Endothelial cell of umbilical vein (primary cell): ENCODE measurements at regions of chr17 and their contacts with region 1.

Region 1: GRCh38 chr17:78013683-78014467 is 55.4 kb downstream of the TNRC6C start:
- DNase-seq: peak; percentile 74
- H3K4me3 ChIP-seq: no peak overlapping the region
- H3K27ac ChIP-seq: no peak overlapping the region
- H3K4me1 ChIP-seq: no peaks in the 10 kb centered on the region
- H3K27me3 ChIP-seq: no peaks in the 10 kb centered on the region
- CTCF ChIP-seq: peak; percentile 54 to 66
- POLR2A ChIP-seq: no peak

Region 2: DNA sequence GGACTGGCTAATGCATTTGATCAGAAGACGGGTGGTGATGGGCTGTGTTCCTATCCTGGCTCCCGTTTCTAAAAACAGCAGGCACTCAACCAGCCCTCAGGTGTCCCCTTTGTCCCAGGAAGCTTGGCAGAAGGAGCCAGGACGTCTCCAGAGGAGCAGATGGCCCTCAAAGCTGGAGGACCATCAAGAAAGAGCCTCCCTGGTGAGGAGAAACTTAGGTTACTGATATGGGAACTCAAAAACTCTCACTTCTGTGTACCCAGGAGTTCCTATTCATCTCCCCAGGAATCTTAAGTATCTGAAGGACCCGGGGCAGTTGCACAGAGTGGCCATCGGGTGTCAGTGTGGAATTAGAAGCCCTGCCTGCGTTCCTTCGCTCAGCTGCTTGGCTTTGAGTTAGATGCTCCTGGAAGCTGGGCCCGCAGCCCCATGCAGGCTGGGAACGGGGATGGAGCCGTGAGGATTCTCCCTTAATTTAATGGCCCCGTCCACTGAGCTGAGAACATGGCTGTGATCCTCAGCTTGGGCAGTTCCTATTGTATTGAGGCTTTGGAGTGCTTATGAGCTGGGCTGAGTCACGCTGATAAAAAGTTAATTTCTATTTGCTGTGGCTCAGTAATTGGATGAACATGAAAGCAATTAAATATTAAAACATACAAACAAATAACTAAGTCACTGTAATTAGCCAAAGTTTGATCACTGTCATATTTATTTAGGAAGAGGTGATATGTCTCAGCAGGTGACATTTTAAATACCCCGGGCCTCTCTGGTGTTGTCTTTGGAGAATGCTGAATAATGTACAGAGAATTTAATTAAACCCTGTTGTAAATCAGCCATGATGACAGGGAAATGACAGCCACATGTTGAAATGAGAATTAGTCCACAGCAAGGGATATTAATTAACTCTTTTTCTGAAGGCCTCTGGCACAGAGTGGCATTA is 471.1 kb before region 1 on chr17:
- CTCF ChIA-PET with region 1: interaction called, 98 read pairs
- POLR2A ChIA-PET with region 1: no interaction called
- dilution Hi-C with region 1: no loop called
- intact Hi-C with region 1: loop called (anchors 1 kb)
- DNase-seq: peak; percentile 71
- H3K4me3 ChIP-seq: no peak overlapping the region
- H3K27ac ChIP-seq: no peak overlapping the region
- H3K4me1 ChIP-seq: no peaks in the 10 kb centered on the region
- H3K27me3 ChIP-seq: peaks cover 28 to 30% of the 10 kb centered on the region in 2 experiments
- CTCF ChIP-seq: peak; percentile 84 to 87
- POLR2A ChIP-seq: no peak

Region 3: DNA sequence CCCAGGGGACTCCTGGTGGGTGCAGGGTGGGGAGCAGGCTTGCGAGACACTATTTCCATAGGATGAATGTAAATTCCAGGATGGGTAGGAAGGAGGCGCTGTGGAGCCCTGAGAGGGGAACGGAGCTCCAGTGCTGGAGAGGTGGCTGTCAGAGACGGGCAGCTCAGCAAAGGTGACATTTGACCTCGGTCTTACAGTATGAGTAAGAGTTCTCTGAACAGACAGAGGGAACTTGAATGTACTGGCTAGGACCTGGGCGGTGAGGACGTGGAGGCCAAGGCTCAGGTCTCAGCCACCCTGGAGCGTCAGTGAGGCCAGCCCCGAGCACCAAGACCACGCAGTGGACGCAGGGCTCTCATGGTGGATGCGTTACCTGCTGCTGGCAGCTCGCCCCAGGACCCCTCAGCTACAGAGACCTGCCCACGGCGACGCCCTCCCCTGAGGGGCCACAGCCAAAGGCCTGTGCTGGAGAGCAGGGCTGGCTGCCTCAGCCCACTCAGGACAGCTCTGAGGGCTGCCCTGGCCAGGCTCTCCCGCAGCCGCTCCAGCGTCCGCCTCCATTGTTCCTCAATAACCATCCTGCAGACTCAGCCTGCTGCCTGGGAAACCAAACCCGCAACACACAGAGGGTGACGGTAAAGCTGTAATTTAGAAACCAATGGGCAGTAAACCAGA is 121.3 kb before region 1 on chr17:
- CTCF ChIA-PET with region 1: interaction called, 25 read pairs
- POLR2A ChIA-PET with region 1: no interaction called
- dilution Hi-C with region 1: no loop called
- intact Hi-C with region 1: loop called (anchors 1 kb)
- DNase-seq: no peak
- H3K4me3 ChIP-seq: no peak overlapping the region
- H3K27ac ChIP-seq: no peak overlapping the region
- H3K4me1 ChIP-seq: peaks cover 4% of the 10 kb centered on the region
- H3K27me3 ChIP-seq: peaks cover 2 to 4% of the 10 kb centered on the region in 2 experiments
- CTCF ChIP-seq: peak; percentile 35 to 37
- POLR2A ChIP-seq: no peak

Region 4: GRCh38 chr17:77963441-77963840 is 50.4 kb before region 1 on chr17:
- CTCF ChIA-PET with region 1: interaction called, 37 read pairs
- POLR2A ChIA-PET with region 1: interaction called, 25 read pairs
- dilution Hi-C with region 1: no loop called
- intact Hi-C with region 1: loop called (anchors 1 kb)
- DNase-seq: peak; percentile 39
- H3K4me3 ChIP-seq: no peak overlapping the region
- H3K27ac ChIP-seq: no peak overlapping the region
- H3K4me1 ChIP-seq: peaks cover 14% of the 10 kb centered on the region
- H3K27me3 ChIP-seq: no peaks in the 10 kb centered on the region
- CTCF ChIP-seq: no peak
- POLR2A ChIP-seq: no peak

Region 5: GRCh38 chr17:77990301-77990700 is 23.6 kb before region 1 on chr17:
- CTCF ChIA-PET with region 1: interaction called, 24 read pairs
- POLR2A ChIA-PET with region 1: no interaction called
- dilution Hi-C with region 1: no loop called
- intact Hi-C with region 1: no loop called
- DNase-seq: no peak
- H3K4me3 ChIP-seq: no peak overlapping the region
- H3K27ac ChIP-seq: no peak overlapping the region
- H3K4me1 ChIP-seq: no peaks in the 10 kb centered on the region
- H3K27me3 ChIP-seq: no peaks in the 10 kb centered on the region
- CTCF ChIP-seq: no peak
- POLR2A ChIP-seq: no peak

Region 6: DNA sequence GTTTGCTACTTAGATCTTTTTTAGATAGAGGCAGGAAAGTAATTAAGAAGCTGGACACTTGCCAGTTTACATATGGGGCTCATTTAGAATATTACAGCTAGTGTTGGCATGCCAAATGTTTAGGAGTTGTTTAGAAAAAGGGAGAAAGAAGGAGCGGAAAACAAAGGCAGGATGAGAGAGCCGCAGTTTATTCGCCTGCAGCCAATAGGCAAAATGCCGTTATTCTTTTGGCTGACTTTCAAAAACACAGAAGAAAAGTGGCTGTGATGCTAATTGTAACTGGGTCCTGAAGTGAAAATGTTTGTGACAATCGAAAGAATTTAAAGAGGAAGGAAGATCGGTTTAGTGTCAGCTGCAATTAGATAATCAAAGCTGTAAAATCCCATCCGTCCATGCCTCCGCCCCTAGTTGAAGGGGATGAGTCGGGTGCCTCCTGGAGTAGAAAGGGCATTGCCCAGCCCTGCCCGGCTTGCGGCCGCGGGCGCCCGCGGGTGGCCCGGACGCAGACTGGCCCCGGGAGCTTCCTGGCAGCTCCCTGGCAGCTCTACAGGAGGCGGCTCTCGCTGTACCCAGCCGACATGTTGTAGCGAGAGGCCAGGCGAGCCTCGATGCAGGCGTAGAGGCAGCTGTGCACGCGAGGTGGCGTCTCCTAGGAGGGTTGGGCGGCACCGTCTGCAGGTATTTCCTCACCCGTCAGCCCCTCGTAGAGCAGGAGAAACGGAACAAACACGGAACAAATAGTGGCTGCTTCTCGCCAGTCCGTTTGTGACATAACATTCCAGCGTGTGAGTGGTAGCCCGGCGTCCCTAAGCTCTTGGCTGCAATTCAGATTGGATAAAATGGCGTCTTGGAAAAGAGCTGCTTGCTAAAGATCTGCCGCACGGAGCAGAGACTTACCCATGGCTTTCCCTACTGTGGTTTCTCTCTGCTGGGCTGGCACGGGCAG is 26.8 kb after region 1 on chr17:
- CTCF ChIA-PET with region 1: interaction called, 33 read pairs
- POLR2A ChIA-PET with region 1: no interaction called
- dilution Hi-C with region 1: no loop called
- intact Hi-C with region 1: no loop called
- DNase-seq: peak; percentile 85
- H3K4me3 ChIP-seq: peak overlapping the region; percentile 11 to 79 (median 54)
- H3K27ac ChIP-seq: peak overlapping the region; percentile 87
- H3K4me1 ChIP-seq: peaks cover 21% of the 10 kb centered on the region
- H3K27me3 ChIP-seq: no peaks in the 10 kb centered on the region
- CTCF ChIP-seq: no peak
- POLR2A ChIP-seq: peak; percentile 92